A673 (cell line): ENCODE measurements at regions of chr11 and their contacts with region 1.

Region 1: DNA sequence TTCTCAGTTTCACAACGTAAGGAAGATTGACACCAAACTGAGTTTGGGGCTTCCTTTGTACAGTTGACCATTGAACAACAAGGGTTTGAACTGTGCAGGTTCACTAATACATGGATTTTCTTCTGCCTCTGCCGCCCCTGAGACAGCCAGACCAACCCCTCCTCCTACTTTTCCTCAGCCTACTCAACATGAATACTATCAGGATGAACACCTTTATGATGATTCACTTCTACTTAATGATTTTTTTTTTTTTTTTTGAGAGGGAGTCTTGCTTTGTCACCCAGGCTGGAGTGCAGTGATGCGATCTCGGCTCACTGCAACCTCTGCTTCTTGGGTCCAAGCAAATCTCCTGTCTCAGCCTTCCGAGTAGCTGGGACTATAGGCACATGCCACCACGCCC is 14.6 kb downstream of the RBM4 start:
- DNase-seq: no peak
- H3K4me3 ChIP-seq: no peak overlapping the region
- H3K27ac ChIP-seq: no peak overlapping the region
- H3K4me1 ChIP-seq: no peaks in the 10 kb centered on the region
- H3K27me3 ChIP-seq: no peaks in the 10 kb centered on the region
- CTCF ChIP-seq: no peak

Region 2: GRCh38 chr11:65961232-65961901 is 691.8 kb before region 1 on chr11 and contains the start of gene SART1:
- CTCF ChIA-PET with region 1: no interaction called
- POLR2A ChIA-PET with region 1: no interaction called
- intact Hi-C with region 1: no loop called
- DNase-seq: peak; percentile 100
- H3K4me3 ChIP-seq: peak within 1 kb of the TSS; percentile 88
- H3K27ac ChIP-seq: peak within 1 kb of the TSS; percentile 94
- H3K4me1 ChIP-seq: peaks cover 8% of the 10 kb centered on the region
- H3K27me3 ChIP-seq: no peaks in the 10 kb centered on the region
- CTCF ChIP-seq: no peak
- total RNA-seq, gene SART1: 95.8 and 96.3 TPM in 2 replicates

Region 3: DNA sequence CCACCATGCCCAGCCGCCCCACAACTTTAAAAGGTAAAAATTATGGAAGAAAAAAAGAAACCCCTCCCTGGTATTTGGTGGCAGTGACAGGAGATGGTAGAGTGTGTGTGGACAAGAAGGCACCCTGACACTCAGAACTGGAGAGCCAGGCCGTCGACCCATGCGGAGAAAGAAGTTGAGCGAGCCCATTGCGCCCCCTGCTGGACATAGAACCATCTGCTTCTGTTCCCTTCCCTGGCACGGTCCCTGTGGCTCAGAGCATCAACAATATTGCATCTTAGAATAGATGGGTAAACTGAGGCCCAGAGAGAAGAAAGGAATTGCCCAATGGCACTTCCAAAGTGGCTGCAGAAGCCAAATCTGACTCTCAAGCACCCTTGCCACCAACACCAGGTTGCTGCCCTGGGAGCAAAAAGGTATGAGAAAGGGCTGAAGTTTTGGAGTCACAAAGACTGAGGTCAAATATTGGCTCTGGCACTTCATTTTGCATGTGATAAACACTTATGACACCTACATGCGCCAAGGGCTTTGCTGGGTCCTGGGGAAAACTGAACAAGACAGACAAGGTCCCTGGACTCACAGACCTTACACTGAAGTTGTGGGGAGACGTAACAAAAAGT is 223.0 kb before region 1 on chr11:
- CTCF ChIA-PET with region 1: interaction called, 10 read pairs
- POLR2A ChIA-PET with region 1: no interaction called
- intact Hi-C with region 1: no loop called
- DNase-seq: peak; percentile 84
- H3K4me3 ChIP-seq: no peak overlapping the region
- H3K27ac ChIP-seq: no peak overlapping the region
- H3K4me1 ChIP-seq: no peaks in the 10 kb centered on the region
- H3K27me3 ChIP-seq: no peaks in the 10 kb centered on the region
- CTCF ChIP-seq: peak; percentile 96

Region 4: GRCh38 chr11:66915046-66915832 is 262.1 kb after region 1 on chr11:
- CTCF ChIA-PET with region 1: no interaction called
- POLR2A ChIA-PET with region 1: no interaction called
- intact Hi-C with region 1: no loop called
- DNase-seq: peak; percentile 22
- H3K4me3 ChIP-seq: no peak overlapping the region
- H3K27ac ChIP-seq: no peak overlapping the region
- H3K4me1 ChIP-seq: no peaks in the 10 kb centered on the region
- H3K27me3 ChIP-seq: no peaks in the 10 kb centered on the region
- CTCF ChIP-seq: no peak